GM18951 (cell line): ENCODE measurements at regions of chr13 and their contacts with region 1.

Region 1: DNA sequence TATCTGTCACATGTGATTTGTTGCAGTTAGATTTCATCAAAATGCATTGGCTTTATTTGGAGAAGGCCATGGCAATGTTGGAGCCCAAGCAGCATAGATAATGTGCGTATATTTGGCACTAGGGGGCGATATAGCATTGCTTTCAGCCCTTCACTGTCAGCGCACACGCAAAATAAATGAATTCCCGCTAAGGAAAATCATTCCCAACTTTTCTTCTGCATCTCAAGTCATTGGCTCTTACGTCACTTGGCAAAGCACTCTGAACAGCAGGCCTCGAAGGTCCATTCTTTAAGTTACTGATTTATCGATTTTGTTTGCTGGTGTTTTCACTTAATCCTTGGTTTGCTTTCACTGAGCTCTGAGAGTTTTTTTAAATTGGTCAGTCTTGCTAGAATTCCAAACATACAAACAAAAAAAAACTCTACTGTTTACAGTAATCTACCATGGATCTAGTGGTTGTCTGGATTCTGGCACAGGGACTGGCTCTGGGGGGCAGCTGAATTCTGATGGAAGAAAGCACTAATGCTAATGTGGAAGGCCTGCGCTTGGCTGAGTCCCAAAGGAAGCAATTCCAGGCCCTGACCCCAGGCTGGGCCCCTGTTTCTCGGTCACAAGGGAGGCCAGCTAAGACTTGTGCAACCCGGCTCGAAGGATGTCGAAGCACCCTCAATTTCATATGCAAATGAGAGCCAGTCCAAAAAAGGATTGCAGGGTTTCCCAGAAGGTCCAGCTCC is 97.7 kb upstream of the IPO5 start:
- POLR2A ChIP-seq: no peak

Region 2: DNA sequence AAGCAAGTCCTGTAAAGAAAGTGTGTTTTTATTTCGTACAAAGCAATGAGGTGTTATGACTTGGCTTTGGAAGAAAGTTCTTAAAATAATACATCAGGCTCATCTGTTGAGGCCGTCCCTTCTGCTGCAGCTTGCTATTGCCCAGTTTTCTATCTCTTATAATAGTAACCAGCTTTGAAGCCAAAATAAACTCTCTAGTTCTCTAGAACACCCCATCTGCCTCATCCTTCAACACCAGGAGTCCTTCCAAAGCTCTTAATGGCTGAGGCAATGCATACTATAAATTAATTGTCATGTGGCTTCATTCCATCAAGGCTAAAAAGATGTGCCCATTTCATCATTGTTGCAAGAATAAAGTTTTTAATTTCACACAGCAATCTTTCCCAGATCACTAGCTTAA is 48.3 kb after region 1 on chr13:
- in situ Hi-C with region 1: loop called (anchors 10 kb)
- POLR2A ChIP-seq: no peak

Region 3: GRCh38 chr13:98405107-98405571 is 549.4 kb after region 1 on chr13:
- in situ Hi-C with region 1: loop called (anchors 25 kb)
- POLR2A ChIP-seq: no peak

Region 4: GRCh38 chr13:98842864-98843481 is 987.2 kb after region 1 on chr13:
- in situ Hi-C with region 1: loop called (anchors 25 kb)
- POLR2A ChIP-seq: no peak